ENCODE measurements at regions of chr3 and their contacts with region 1.

Region 1: DNA sequence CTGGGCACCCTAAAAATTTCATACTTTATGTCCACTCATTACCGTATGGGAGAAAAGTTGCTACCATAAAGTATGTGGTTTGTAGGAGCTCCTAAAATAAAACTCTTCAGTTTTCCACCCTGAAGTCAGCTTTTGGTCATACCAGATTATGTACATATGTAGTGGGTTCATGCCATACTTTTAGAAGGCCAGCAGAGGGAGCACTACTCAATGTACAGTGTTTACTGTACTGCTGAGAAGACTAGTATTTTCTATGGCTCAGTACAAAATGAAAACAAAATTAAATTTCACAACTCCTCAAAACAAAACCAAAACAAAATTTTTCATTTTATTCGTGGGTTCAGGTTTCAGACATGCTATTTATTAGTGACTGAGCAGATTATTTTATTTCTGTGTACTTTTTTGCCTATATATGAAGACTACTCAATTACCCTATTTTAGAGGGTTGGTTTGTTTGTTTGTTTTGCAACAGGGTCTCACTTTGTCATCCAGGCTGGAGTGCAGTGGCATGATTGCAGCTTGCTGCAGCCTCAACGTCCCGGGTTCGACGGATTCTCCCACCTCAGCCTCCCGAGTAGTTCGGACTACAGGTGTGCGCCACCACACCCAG is 24.3 kb downstream of the NXPE3 start:
- DNase-seq: peak in 32 of 42 donors; percentile 23 to 89 (median 68)

Region 2: GRCh38 chr3:101695779-101696372 is 107.4 kb before region 1 on chr3:
- intact Hi-C with region 1: loop called (anchors 10 kb)
- DNase-seq: peak in 23 of 42 donors; percentile 14 to 87 (median 55)

Region 3: DNA sequence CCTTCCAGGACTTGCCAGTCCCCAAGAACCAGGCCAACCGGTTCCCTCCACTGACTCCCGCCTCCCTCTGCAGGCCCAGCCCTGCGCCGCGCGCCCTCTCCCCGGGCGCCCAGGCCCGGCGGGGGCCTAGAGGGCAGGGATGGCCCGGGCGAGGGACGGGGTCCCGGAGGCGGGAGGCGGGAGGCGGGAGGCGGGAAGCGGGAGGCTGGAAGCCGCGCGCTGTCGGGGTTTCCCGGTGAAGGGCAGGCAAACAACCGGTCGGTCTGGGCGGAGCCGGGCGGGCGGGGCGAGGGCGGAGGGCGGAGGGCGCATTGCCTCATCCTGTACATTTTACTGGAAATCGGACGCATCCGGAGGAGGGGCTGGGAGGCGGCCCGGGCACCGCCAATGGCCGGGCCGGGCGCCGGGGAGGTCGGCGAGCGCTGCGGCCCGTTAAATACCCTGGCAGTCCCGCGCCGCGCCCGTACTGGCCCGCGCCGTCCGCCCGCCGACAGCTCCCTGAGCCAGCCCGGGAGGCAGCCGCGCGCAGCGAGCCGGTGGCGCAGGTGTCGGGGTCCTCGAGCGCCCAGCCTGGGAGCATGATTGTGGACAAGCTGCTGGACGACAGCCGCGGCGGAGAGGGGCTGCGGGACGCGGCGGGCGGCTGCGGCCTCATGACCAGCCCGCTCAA is 45.9 kb after region 1 on chr3 and contains the start of gene NFKBIZ:
- intact Hi-C with region 1: no loop called
- DNase-seq: peak; percentile 76 to 96 (median 91)

Region 4: GRCh38 chr3:102180291-102181039 is 377.2 kb after region 1 on chr3:
- intact Hi-C with region 1: no loop called
- DNase-seq: no peak

Region 5: GRCh38 chr3:102374863-102375634 is 571.8 kb after region 1 on chr3:
- intact Hi-C with region 1: no loop called
- DNase-seq: no peak

Region 6: DNA sequence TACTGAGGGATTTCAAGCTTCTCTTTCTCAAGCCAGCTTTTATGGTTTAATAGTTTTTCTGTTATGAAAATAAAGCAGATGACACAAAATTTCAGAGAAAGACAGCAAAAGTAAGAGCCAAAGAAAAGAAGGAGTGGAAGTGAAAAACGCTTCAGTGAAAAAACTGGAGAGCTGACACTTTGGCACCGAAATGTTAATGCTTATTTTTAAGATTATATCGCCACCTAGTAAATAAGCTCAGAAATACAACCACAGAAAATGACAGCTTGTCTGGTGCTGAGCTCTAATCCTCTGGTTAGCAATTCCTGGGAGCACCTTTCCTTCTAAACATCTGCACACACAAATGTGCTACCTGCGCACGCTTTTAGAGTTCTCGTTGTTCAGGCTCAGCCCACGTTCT is 733.2 kb after region 1 on chr3:
- intact Hi-C with region 1: loop called (anchors 10 kb)
- DNase-seq: peak in 18 of 42 donors; percentile 2 to 41 (median 8)

Measured in head of caudate nucleus (tissue), 42 donors.